ENCODE measurements at regions of chr5 and their contacts with region 1.

Region 1: GRCh38 chr5:13987843-13988464 is 43.5 kb upstream of the DNAH5 start:
- DNase-seq: peak; percentile 60

Region 2: GRCh38 chr5:14286574-14287421 is 298.8 kb after region 1 on chr5:
- in situ Hi-C with region 1: loop called (anchors 25 kb)
- DNase-seq: no peak

Measured in Caki2 (cell line).